ENCODE measurements at regions of chr16 and their contacts with region 1.

Region 1: GRCh38 chr16:30731411-30731810 is 16.8 kb upstream of the PHKG2 start:
- DNase-seq: no peak
- H3K4me3 ChIP-seq: no peak overlapping the region
- H3K27ac ChIP-seq: no peak overlapping the region
- H3K4me1 ChIP-seq: no peaks in the 10 kb centered on the region
- H3K27me3 ChIP-seq: no peaks in the 10 kb centered on the region
- CTCF ChIP-seq: no peak
- POLR2A ChIP-seq: no peak

Region 2: DNA sequence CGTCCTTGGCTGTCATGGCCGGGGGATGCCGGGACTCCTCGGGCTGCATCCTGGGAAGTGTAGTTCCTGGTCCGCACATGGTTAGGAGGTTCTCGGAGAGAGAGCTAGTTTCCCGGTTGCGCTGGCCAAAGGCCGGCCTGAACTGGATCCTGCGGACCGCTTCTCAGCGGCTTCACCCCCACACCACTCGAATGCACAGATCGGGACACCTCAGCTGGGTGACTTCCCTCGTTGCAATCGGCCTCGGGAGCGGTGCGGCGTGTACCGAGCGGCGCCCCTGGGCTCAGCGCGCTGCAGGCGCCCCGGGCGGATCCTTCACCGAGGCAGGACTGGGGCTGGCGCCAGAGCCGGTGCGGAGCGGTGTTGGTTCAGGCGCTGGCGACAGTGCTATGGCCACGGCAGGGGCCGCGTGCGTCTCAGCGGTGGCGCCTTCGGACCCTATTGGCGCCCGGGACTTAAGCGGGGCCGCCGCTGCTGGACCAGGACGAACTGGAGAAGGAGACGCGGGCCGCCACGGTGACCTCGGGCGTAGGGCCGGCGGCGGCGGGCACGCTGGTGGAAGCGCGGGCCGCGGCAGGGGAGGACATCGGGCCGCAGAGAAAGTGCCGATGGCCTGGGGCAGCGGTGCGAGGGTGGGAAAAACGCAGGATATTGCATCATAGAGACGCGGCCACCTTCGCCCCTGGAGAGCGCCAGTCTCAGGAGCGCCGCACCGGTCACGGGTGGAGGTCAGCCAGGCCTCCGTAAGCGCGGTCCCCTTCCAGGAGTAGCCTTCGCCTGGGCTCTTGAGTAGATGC is 44.2 kb after region 1 on chr16:
- intact Hi-C with region 1: loop called (anchors 5 kb)
- DNase-seq: peak; percentile 77
- H3K4me3 ChIP-seq: peak overlapping the region; percentile 49 to 64
- H3K27ac ChIP-seq: peak overlapping the region; percentile 70 to 76
- H3K4me1 ChIP-seq: no peaks in the 10 kb centered on the region
- H3K27me3 ChIP-seq: no peaks in the 10 kb centered on the region
- CTCF ChIP-seq: no peak
- POLR2A ChIP-seq: no peak